Activated CD4-positive, alpha-beta T cell treated with anti-CD3 and anti-CD28 coated beads for 36 hours (primary cell): ENCODE measurements at regions of chr19 and their contacts with region 1.

Region 1: GRCh38 chr19:50461066-50461875 is 15.0 kb upstream of the EMC10 start:
- DNase-seq: peak; percentile 79
- ATAC-seq: peak; percentile 70
- H3K4me3 Mint-ChIP-seq: peak overlapping the region; percentile 3
- H3K27ac Mint-ChIP-seq: no peak overlapping the region
- H3K4me1 Mint-ChIP-seq: peaks cover 16% of the 10 kb centered on the region
- H3K27me3 Mint-ChIP-seq: peaks cover 25% of the 10 kb centered on the region

Region 2: DNA sequence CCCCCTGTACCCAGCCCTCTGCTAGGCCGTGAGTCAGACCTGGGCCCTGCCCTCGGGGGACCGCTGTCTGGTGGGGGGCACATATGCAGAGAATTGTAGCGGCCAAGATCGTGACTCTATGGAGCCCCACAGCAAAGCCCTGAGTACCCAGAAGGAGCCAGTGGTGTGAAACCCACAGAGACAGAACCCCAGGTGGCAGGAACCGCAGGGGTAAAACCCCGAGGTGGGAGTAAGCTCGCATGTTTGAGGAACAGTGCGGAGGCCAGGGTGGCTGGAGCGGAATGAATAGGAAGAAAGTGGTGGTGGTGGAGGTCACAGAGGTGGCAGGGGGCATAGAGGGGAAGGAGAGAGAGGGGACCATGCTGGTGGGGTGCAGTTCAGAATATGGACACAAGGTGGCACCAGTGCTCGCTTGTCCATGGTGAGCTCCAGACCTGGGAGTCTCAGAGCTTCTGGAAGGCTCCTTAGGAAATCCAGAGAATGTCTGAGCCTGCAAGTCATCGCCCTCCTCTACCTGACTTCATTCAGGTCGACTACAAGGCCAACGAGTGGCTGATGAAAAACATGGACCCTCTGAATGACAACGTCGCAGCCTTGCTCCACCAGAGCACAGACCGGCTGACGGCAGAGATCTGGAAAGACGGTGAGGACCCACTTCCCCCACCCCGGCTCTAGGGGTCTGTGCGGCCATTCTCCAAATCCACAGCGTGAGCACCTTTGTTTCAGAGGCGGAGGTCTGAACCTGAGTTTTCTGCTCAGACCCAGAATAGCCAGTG is 209.0 kb before region 1 on chr19:
- CTCF ChIA-PET with region 1: interaction called, 3 read pairs
- POLR2A ChIA-PET with region 1: no interaction called
- intact Hi-C with region 1: loop called in 1 of 2 experiments (anchors 1 kb)
- DNase-seq: peak; percentile 71
- ATAC-seq: no peak
- H3K4me3 Mint-ChIP-seq: no peak overlapping the region
- H3K27ac Mint-ChIP-seq: no peak overlapping the region
- H3K4me1 Mint-ChIP-seq: no peaks in the 10 kb centered on the region
- H3K27me3 Mint-ChIP-seq: peaks cover 14% of the 10 kb centered on the region

Region 3: GRCh38 chr19:51034718-51035117 is 573.4 kb after region 1 on chr19 and contains the start of gene KLK12:
- CTCF ChIA-PET with region 1: no interaction called
- POLR2A ChIA-PET with region 1: no interaction called
- intact Hi-C with region 1: no loop called
- DNase-seq: no peak
- ATAC-seq: no peak
- H3K4me3 Mint-ChIP-seq: no peak within 1 kb of the TSS
- H3K27ac Mint-ChIP-seq: no peak within 1 kb of the TSS
- H3K4me1 Mint-ChIP-seq: no peaks in the 10 kb centered on the region
- H3K27me3 Mint-ChIP-seq: peaks cover 11% of the 10 kb centered on the region
- total RNA-seq, gene KLK12: not detected